Activated CD4-positive, alpha-beta T cell treated with anti-CD3 and anti-CD28 coated beads, Interleukin-2, amount 10 ng/mL, durations not matched to agents 24 days and 14 days (primary cell): ENCODE measurements at regions of chr1 and their contacts with region 1.

Region 1: DNA sequence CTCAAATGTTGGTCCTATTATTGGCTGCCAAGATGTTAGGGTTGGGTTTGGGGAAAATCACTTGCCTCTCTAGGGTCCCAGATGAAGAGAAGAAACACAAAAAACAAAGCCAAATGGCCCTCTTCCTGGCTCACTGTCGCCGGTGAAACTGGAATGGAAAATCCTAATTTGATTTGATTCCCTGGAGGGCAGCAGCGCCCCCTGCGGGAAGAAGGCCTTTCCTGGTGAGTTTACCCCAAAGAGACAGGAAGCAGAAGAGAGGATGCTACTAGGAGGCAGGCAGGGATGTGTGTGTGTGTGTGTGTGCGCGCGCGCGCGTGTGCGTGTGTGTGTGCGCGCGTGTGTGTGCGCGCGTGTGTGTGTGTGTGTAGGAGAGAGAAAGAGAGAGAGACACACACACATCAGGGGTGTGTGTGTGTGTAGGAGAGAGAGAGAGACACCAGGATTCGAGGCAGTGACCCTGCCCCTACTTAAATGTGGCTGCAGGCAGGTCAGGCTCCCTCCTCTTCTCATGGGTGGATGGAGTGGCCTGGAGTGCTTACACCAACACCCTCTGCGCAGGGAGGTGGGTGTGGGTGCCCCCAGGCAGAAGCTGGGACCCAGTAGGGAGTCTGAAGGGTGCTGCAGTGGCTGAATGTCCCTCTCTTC is 3.1 kb upstream of the SELENON start:
- DNase-seq: peak; percentile 94
- H3K4me3 Mint-ChIP-seq: peak overlapping the region; percentile 11
- H3K27ac Mint-ChIP-seq: peak overlapping the region; percentile 48
- H3K4me1 Mint-ChIP-seq: peaks cover 25% of the 10 kb centered on the region
- H3K27me3 Mint-ChIP-seq: peaks cover 32% of the 10 kb centered on the region

Region 2: GRCh38 chr1:25608488-25609178 is 188.3 kb before region 1 on chr1:
- intact Hi-C with region 1: loop called (anchors 2 kb)
- DNase-seq: peak; percentile 95
- H3K4me3 Mint-ChIP-seq: no peak overlapping the region
- H3K27ac Mint-ChIP-seq: peak overlapping the region; percentile 59
- H3K4me1 Mint-ChIP-seq: peaks cover 7% of the 10 kb centered on the region
- H3K27me3 Mint-ChIP-seq: peaks cover 71% of the 10 kb centered on the region

Region 3: GRCh38 chr1:25781130-25781433 is 15.9 kb before region 1 on chr1:
- intact Hi-C with region 1: no loop called
- DNase-seq: no peak
- H3K4me3 Mint-ChIP-seq: no peak overlapping the region
- H3K27ac Mint-ChIP-seq: no peak overlapping the region
- H3K4me1 Mint-ChIP-seq: peaks cover under 1% of the 10 kb centered on the region
- H3K27me3 Mint-ChIP-seq: peaks cover 28% of the 10 kb centered on the region